ENCODE measurements at regions of chr3 and their contacts with region 1.

Region 1: DNA sequence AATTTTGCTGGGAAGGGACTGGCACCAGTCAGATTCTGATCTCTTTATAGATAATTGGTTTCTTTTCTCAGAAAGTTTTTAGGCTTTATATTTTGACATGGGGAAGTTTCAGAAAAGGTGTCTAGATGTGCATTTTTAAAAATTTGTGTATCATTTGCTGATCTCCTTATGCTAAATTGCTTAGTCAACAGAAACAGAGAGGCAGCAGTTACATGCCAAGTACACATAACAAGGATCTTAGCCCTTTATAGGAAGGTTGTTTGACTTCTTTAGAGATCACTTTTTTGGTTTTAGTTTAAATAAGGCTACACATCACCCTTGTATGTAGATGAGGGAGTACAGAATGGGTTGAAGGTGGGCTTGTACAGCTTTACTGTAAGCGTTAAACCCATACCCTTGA is 53.5 kb downstream of the RAP2B start:
- DNase-seq: no peak
- H3K4me3 ChIP-seq: no peak overlapping the region
- CTCF ChIP-seq: no peak

Region 2: DNA sequence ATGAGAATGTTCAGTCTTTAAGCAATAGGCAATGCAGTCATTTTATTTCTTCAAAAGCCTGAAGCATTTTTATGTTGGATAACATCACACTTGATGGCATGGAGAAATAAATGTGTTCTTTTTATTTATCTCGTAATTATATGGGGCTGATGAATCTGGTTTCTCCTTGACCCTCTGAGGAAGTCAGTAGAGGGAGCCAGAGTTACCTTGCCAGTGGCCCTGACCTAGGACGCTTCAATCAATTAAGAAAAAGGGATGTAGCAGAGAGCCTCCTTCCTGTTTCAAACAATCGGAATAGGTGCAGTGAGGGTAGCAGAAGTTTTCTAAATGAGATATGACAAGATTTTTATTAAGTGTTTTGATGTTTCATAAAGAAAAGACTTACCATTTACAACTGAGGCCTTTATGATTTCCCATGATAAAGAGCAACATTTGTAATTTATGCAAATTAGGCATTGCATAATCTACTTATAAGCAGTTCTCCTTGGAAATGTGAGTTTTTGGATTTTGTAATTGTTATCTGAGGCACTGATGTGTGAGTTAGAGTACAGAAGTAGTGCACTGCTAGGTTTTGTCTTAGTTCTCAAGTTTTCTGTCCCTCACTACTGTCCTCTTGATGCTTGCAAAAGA is 75.7 kb after region 1 on chr3:
- CTCF ChIA-PET with region 1: interaction called, 10 read pairs
- POLR2A ChIA-PET with region 1: no interaction called
- DNase-seq: no peak
- H3K4me3 ChIP-seq: no peak overlapping the region
- CTCF ChIP-seq: peak; percentile 32

Measured in AG04449 (cell line).